ENCODE measurements at regions of chr22 and their contacts with region 1.

Region 1: GRCh38 chr22:27804470-27805297 is 3.1 kb upstream of the MN1 start:
- DNase-seq: no peak
- H3K4me3 ChIP-seq: peak overlapping the region in 1 of 4 donors; percentile 12
- H3K27ac ChIP-seq: peak overlapping the region in 2 of 4 donors; percentile 35 to 55
- H3K4me1 ChIP-seq: peaks cover 21 to 56% (median 48%) of the 10 kb centered on the region in 4 donors
- H3K27me3 ChIP-seq: peaks cover 0 to 12% (median 0%) of the 10 kb centered on the region in 4 donors
- CTCF ChIP-seq: peak; percentile 66 to 80 (median 71)
- EP300 ChIP-seq: no peak
- POLR2A ChIP-seq: no peak

Region 2: DNA sequence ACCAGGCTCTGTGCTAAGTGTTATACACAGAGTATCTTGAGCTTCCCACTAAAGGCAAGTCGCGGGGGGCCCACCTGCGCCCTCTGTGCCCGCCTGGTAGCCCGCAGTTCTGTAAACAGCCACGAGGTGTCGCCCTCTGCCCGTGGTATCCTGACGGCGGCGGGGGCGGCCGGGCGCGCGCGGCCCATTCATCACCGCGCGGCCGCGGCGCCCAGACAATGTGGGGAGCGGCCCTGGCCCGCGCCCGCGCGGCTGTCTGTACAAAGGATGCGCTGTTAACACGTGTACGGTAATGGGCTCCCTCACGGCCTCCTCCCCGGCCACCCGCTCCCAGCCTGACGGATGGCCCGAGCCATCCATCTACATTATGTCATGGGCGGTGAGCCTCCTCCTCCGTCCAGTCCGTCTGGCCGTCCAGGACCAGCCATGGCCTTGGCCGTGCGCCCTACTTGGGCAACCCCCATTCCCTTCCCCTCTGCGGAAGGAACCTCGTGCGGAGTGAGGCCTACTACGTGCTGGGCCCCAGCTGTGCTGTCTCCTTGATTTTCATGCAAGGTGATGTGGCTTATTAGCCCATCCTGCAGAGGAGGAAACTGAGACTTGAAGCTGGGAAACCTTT is 1047.9 kb before region 1 on chr22:
- intact Hi-C with region 1: loop called (anchors 5 kb)
- DNase-seq: no peak
- H3K4me3 ChIP-seq: peak overlapping the region; percentile 36 to 56 (median 44)
- H3K27ac ChIP-seq: no peak overlapping the region
- H3K4me1 ChIP-seq: peaks cover 4 to 9% (median 8%) of the 10 kb centered on the region in 4 donors
- H3K27me3 ChIP-seq: no peaks in the 10 kb centered on the region
- CTCF ChIP-seq: peak; percentile 96 to 98 (median 97)
- EP300 ChIP-seq: no peak
- POLR2A ChIP-seq: no peak

Region 3: DNA sequence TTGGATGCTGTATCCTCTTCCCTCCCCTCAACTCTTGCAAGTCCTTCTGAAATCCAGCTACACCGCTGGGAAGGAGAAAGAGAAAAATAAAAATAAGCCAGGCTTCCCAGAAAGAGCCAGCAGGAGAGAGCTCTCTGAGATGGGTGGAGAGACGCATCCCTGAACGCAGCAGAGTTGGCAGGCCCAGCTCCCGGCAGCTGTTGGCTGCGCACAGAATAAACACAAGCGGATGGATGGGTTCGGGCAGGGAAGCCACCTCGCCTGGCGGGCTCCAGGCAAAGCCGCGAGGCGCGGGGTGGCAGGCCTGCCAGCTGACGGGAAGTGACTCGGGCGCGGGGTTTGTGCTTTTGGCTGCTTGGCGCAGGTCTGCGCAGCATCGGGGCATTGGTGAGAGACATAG is 609.6 kb before region 1 on chr22:
- intact Hi-C with region 1: loop called (anchors 10 kb)
- DNase-seq: no peak
- H3K4me3 ChIP-seq: no peak overlapping the region
- H3K27ac ChIP-seq: peak overlapping the region; percentile 63 to 79 (median 70)
- H3K4me1 ChIP-seq: peaks cover 0 to 22% (median 18%) of the 10 kb centered on the region in 4 donors
- H3K27me3 ChIP-seq: no peaks in the 10 kb centered on the region
- CTCF ChIP-seq: peak in 1 of 3 experiments; percentile 18
- EP300 ChIP-seq: peak; percentile 31
- POLR2A ChIP-seq: no peak

Region 4: DNA sequence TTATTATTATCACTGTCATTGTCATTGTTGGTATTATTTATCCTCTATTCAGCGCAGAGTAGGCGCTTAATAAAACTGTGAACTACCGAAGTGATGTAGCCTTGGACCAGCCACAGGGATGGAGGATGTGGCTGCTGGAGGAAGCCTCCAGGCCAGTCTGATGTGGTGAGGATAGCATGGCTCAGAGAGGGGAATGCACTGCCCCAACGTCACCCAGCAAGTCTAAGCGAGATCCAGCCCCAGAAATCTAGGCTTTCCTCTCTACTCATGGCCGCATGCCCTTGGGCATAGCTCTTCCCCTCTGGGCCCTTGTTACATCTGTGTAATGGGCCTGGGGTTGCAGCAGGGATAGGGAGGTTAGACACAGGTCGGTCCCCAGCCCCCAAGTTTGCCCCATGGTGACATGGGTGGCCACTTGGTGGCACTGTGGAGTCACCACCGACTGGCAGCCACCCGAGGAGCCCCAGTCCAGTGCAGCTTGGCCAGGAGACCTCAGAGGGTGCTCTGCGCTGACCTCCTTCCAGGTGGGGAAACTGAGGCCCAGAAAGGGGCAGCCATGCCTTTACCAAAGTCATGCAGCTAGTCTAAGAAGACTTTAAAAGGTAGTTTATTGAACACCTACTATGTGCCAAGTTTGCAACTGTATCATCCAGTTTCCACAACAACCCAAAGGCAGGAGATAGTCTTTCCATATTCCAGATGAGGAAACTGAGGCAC is 398.9 kb before region 1 on chr22:
- intact Hi-C with region 1: loop called (anchors 2 kb)
- DNase-seq: no peak
- H3K4me3 ChIP-seq: no peak overlapping the region
- H3K27ac ChIP-seq: no peak overlapping the region
- H3K4me1 ChIP-seq: peaks cover 0 to 11% (median 2%) of the 10 kb centered on the region in 4 donors
- H3K27me3 ChIP-seq: peaks cover 0 to 8% (median 0%) of the 10 kb centered on the region in 4 donors
- CTCF ChIP-seq: peak; percentile 65 to 73 (median 66)
- EP300 ChIP-seq: no peak
- POLR2A ChIP-seq: no peak

Region 5: GRCh38 chr22:27896245-27896644 is 91.6 kb after region 1 on chr22:
- intact Hi-C with region 1: no loop called
- DNase-seq: no peak
- H3K4me3 ChIP-seq: no peak overlapping the region
- H3K27ac ChIP-seq: no peak overlapping the region
- H3K4me1 ChIP-seq: peaks cover 11 to 24% (median 18%) of the 10 kb centered on the region in 4 donors
- H3K27me3 ChIP-seq: no peaks in the 10 kb centered on the region
- CTCF ChIP-seq: no peak
- EP300 ChIP-seq: no peak
- POLR2A ChIP-seq: no peak

Measured in esophagus muscularis mucosa (tissue), 4 donors.